ENCODE measurements at regions of chr9 and their contacts with region 1.

Region 1: GRCh38 chr9:100411472-100412283 is 15.3 kb upstream of the MSANTD3 start:
- DNase-seq: peak; percentile 88 to 90
- H3K4me3 ChIP-seq: peak overlapping the region; percentile 37 to 40
- H3K27ac ChIP-seq: peak overlapping the region in 1 of 2 donors; percentile 32
- H3K4me1 ChIP-seq: no peaks in the 10 kb centered on the region
- H3K27me3 ChIP-seq: no peaks in the 10 kb centered on the region
- CTCF ChIP-seq: no peak
- POLR2A ChIP-seq: peak in 1 of 2 donors; percentile 31

Region 2: GRCh38 chr9:99819856-99820684 is 591.6 kb before region 1 on chr9:
- intact Hi-C with region 1: loop called (anchors 10 kb)
- DNase-seq: peak; percentile 94 to 97
- H3K4me3 ChIP-seq: peak overlapping the region; percentile 57 to 81
- H3K27ac ChIP-seq: peak overlapping the region; percentile 96 to 99
- H3K4me1 ChIP-seq: peaks cover 7 to 12% of the 10 kb centered on the region in 2 donors
- H3K27me3 ChIP-seq: no peaks in the 10 kb centered on the region
- CTCF ChIP-seq: no peak
- POLR2A ChIP-seq: peak in 1 of 2 donors; percentile 69

Region 3: GRCh38 chr9:101925498-101925897 is 1513.8 kb after region 1 on chr9:
- intact Hi-C with region 1: no loop called
- DNase-seq: no peak
- H3K4me3 ChIP-seq: no peak overlapping the region
- H3K27ac ChIP-seq: no peak overlapping the region
- H3K4me1 ChIP-seq: no peaks in the 10 kb centered on the region
- H3K27me3 ChIP-seq: no peaks in the 10 kb centered on the region
- CTCF ChIP-seq: no peak
- POLR2A ChIP-seq: no peak

Measured in uterus (tissue), 4 donors.